ENCODE measurements at regions of chr3 and their contacts with region 1.

Region 1: GRCh38 chr3:108835101-108835500 is 12.5 kb downstream of the TRAT1 start:
- DNase-seq: peak; percentile 66
- H3K4me3 Mint-ChIP-seq: peak overlapping the region; percentile 81
- H3K27ac Mint-ChIP-seq: peak overlapping the region; percentile 93
- H3K4me1 Mint-ChIP-seq: peaks cover 77% of the 10 kb centered on the region
- H3K27me3 Mint-ChIP-seq: no peaks in the 10 kb centered on the region

Region 2: GRCh38 chr3:107604057-107604822 is 1230.9 kb before region 1 on chr3:
- CTCF ChIA-PET with region 1: no interaction called
- intact Hi-C with region 1: loop called (anchors 10 kb)
- DNase-seq: peak; percentile 11
- H3K4me3 Mint-ChIP-seq: no peak overlapping the region
- H3K27ac Mint-ChIP-seq: no peak overlapping the region
- H3K4me1 Mint-ChIP-seq: peaks cover 36% of the 10 kb centered on the region
- H3K27me3 Mint-ChIP-seq: no peaks in the 10 kb centered on the region

Region 3: DNA sequence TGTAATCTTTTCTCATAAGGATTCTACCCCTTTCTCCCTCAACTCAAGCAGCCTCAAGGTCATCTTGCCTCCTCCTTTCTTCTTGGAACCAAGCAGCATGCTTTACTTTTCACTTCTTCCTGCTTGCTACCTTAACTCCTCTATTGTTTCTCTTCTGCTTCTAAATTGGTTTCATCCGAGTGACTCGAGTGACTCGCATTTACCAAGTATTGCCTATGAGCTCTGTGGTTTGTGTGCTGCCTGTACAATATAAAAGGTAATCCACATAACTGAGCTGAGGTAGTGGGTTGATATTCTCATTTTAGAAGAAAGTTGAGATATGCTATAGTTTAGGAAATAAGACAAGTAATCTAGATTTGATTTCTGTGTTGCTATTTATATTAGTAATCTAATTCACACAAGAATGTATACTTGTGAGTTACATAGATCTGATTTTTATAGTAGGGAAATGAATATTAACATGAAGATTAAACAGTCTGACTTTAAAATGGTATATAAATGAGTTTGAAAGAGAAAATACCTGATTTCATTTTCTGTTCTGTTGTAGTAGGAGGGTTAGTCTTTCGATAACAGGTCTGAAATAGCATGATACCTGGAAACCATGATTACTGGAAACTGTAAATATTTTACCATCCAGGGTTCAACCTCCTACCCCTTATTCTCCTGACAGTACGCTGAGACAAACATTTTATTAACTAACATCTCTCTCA is 533.3 kb before region 1 on chr3:
- CTCF ChIA-PET with region 1: no interaction called
- intact Hi-C with region 1: loop called (anchors 5 kb)
- DNase-seq: peak; percentile 26
- H3K4me3 Mint-ChIP-seq: peak overlapping the region; percentile 48
- H3K27ac Mint-ChIP-seq: peak overlapping the region; percentile 59
- H3K4me1 Mint-ChIP-seq: peaks cover 45% of the 10 kb centered on the region
- H3K27me3 Mint-ChIP-seq: no peaks in the 10 kb centered on the region

Region 4: GRCh38 chr3:108847187-108847586 is 12.1 kb after region 1 on chr3:
- CTCF ChIA-PET with region 1: interaction called, 5 read pairs
- intact Hi-C with region 1: loop called (anchors 1 kb)
- DNase-seq: no peak
- H3K4me3 Mint-ChIP-seq: no peak overlapping the region
- H3K27ac Mint-ChIP-seq: no peak overlapping the region
- H3K4me1 Mint-ChIP-seq: peaks cover 74% of the 10 kb centered on the region
- H3K27me3 Mint-ChIP-seq: no peaks in the 10 kb centered on the region